GM12878 (cell line): ENCODE measurements at regions of chr2 and their contacts with region 1.

Region 1: DNA sequence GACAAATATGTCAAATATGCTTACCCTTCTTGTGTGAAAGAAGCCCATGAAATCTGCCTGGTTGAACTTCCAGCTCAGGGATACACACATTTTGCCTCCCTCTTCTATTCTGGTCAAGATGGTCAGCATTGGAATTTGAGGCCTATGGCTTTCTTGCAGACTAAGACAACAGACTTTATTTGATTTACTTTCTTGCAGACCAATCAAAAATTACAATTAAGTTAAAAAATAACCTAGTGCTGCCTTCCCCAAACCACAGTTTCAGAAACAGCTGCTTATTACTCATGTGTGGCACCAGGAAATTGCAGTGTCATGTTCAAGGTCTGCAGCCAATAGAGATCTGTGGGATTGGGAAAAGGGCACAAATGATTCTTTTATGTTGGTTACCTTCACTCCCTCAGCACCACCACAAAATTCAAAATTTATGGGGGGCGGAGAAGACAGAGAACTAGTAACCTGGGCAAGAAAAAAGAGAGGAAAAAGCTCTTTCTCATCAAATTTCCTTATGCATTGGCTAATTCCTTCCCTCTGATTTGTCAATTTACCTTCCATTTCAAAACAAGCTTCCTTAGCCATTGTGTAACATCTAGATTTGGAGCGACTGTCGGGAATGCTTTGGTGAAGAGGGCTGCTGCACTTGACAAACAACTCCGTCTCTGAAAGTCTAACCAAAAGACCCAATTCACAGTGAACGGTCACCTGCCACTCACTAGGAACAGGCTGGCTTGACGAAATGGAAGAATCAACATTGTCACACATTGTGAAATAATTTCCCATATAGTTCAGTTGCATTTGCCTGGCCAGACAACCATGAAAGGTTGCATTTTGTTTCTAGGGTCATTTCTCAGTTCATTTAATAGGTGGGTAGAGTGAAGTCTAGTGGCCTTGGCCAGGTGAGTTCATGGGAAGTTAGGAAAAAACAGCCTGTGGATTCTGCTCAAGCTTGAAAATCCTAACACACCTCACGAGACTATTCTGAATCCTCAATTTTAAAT is 100.4 kb upstream of the FZD5 start:
- DNase-seq: no peak
- ATAC-seq: peak; percentile 62
- H3K4me3 ChIP-seq: no peak overlapping the region
- H3K27ac ChIP-seq: no peak overlapping the region
- H3K4me1 ChIP-seq: no peaks in the 10 kb centered on the region
- H3K27me3 ChIP-seq: no peaks in the 10 kb centered on the region
- CTCF ChIP-seq: no peak
- EP300 ChIP-seq: no peak
- POLR2A ChIP-seq: no peak
- RAD21 ChIP-seq: no peak

Region 2: DNA sequence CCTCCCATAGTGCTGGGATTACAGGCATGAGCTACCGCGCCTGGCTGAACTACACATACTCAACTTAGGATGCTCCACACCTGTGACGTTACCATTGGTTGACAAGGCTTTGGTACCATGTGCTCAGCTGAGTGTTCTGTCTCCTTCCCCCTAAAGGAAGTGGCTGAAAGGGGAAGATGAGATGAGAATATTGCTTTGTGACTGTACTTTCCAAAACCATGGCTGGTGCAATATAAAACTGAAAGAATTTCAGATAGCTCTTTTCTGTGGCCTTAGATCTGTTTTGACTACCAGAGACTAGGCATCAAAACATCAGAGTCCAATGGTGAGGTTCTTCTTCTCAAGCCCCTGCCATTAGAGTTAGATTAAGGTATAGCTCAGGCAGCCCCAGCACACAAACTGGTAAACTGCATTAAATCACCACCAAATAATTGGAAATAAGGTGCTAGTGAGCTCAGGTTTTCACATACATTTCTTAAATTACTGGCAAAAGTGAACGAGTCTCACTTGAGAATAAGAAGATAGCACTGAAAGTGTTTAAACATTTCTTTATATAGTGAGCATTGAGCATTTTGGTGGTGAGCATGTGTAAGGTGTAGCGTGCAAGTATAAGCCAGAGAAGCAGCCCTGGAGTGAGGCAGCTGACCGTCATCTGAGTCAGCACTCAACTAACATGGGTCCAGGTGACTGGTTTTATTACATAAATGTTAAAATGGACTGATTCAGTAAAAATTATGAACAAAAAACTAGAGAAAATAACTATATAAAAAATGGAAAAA is 13.1 kb after region 1 on chr2:
- CTCF ChIA-PET with region 1: interaction called, 5 read pairs
- POLR2A ChIA-PET with region 1: interaction called, 6 read pairs
- RAD21 ChIA-PET with region 1: interaction called, 4 read pairs
- SMC1A ChIA-PET with region 1: interaction called, 19 read pairs
- in situ Hi-C with region 1: no loop called
- intact Hi-C with region 1: no loop called
- DNase-seq: no peak
- ATAC-seq: peak; percentile 88
- H3K4me3 ChIP-seq: no peak overlapping the region
- H3K27ac ChIP-seq: no peak overlapping the region
- H3K4me1 ChIP-seq: no peaks in the 10 kb centered on the region; the same call in 1 of the 2 replicates
- H3K27me3 ChIP-seq: no peaks in the 10 kb centered on the region
- CTCF ChIP-seq: no peak
- EP300 ChIP-seq: no peak
- POLR2A ChIP-seq: no peak
- RAD21 ChIP-seq: no peak

Region 3: DNA sequence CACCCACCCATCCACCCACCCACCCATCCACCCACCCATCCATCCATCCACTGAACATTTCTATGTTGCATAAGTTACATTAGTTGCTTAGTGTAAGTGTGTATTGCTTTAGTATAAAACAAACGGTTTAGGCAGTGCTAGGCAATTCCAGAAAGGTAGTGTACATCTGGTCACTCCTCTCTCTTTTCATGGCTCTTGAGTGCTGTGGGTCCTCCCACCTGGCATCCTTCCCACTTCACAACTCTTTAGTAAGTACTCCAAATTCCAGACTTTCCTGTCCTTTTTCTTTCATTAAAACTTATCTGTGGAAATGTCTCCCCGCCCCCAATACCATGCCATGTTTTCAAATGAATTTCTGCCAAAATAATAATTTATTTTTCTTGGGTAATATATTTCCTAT is 32.7 kb after region 1 on chr2:
- CTCF ChIA-PET with region 1: interaction called, 5 read pairs
- POLR2A ChIA-PET with region 1: interaction called, 5 read pairs
- RAD21 ChIA-PET with region 1: interaction called, 20 read pairs
- SMC1A ChIA-PET with region 1: interaction called, 10 read pairs
- in situ Hi-C with region 1: no loop called
- intact Hi-C with region 1: no loop called
- DNase-seq: no peak
- ATAC-seq: no peak
- H3K4me3 ChIP-seq: no peak overlapping the region
- H3K27ac ChIP-seq: no peak overlapping the region
- H3K4me1 ChIP-seq: no peaks in the 10 kb centered on the region
- H3K27me3 ChIP-seq: no peaks in the 10 kb centered on the region
- CTCF ChIP-seq: no peak
- EP300 ChIP-seq: no peak
- POLR2A ChIP-seq: no peak
- RAD21 ChIP-seq: no peak